GM18951 (cell line): ENCODE measurements at regions of chr18 and their contacts with region 1.

Region 1: GRCh38 chr18:35386600-35387351 is 9.6 kb upstream of the ZNF396 start:
- POLR2A ChIP-seq: no peak

Region 2: GRCh38 chr18:35756506-35757117 is 369.8 kb after region 1 on chr18:
- in situ Hi-C with region 1: no loop called
- POLR2A ChIP-seq: no peak

Region 3: DNA sequence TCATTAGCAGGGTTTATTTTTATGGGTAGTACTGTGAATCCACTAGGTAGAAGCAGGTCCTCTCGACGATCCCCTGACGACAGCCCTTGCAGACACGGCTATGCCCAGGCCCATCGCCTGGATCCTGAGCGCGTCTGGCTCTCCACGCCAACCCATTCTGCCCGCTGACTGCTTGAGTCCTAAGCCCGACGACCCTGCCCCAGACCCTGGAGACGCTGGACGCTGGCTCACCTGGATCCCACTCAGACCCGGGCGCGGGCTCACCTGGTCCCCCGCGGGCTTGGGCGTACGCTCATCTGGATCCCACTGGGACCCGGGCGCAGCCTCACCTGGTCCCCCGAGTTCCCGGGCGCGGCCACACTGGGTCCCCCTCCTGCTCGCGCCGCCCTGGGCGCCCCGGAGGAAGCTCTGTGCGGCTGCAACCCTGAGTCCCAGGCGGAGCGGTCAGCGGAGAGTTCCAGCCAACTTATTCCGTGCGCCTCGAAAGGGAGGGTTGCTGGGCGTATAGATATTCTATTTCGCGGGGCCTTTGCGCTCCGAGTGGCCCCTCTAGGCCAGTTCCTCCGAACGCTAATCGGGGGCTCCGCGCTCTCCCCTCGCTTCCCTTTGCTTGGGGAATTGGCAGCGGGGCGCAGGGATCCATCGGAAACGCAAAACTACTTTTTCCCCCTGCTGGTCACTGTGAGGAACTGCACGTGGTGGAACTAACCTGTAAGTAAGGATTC is 563.3 kb after region 1 on chr18:
- in situ Hi-C with region 1: loop called (anchors 25 kb)
- POLR2A ChIP-seq: no peak

Region 4: GRCh38 chr18:35972197-35973052 is 585.6 kb after region 1 on chr18 and contains the start of gene RMP24:
- in situ Hi-C with region 1: no loop called
- POLR2A ChIP-seq: peak; percentile 97

Region 5: GRCh38 chr18:36265015-36265414 is 878.2 kb after region 1 on chr18:
- in situ Hi-C with region 1: loop called (anchors 25 kb)
- POLR2A ChIP-seq: no peak